CD8-positive, alpha-beta T cell (primary cell): ENCODE measurements at regions of chr7 and their contacts with region 1.

Region 1: GRCh38 chr7:130896898-130897514 is 163.0 kb upstream of the KLF14 start:
- DNase-seq: peak; percentile 51 to 89 (median 70)
- ATAC-seq: peak; percentile 70
- H3K4me3 ChIP-seq: no peak overlapping the region
- H3K4me3 Mint-ChIP-seq: no peak overlapping the region
- H3K27ac ChIP-seq: peak overlapping the region in 1 of 2 experiments; percentile 18
- H3K27ac Mint-ChIP-seq: peak overlapping the region; percentile 24
- H3K4me1 ChIP-seq: peaks cover 38% of the 10 kb centered on the region
- H3K4me1 Mint-ChIP-seq: peaks cover 70% of the 10 kb centered on the region
- H3K27me3 ChIP-seq: no peaks in the 10 kb centered on the region
- H3K27me3 Mint-ChIP-seq: no peaks in the 10 kb centered on the region
- CTCF ChIP-seq: peak; percentile 79

Region 2: GRCh38 chr7:130921391-130922180 is 24.6 kb after region 1 on chr7:
- CTCF ChIA-PET with region 1: interaction called, 13 read pairs
- POLR2A ChIA-PET with region 1: no interaction called
- intact Hi-C with region 1: no loop called
- DNase-seq: no peak
- ATAC-seq: no peak
- H3K4me3 ChIP-seq: no peak overlapping the region
- H3K4me3 Mint-ChIP-seq: no peak overlapping the region
- H3K27ac ChIP-seq: no peak overlapping the region
- H3K27ac Mint-ChIP-seq: no peak overlapping the region
- H3K4me1 ChIP-seq: peaks cover 21% of the 10 kb centered on the region
- H3K4me1 Mint-ChIP-seq: peaks cover 81% of the 10 kb centered on the region
- H3K27me3 ChIP-seq: no peaks in the 10 kb centered on the region
- H3K27me3 Mint-ChIP-seq: no peaks in the 10 kb centered on the region
- CTCF ChIP-seq: no peak

Region 3: GRCh38 chr7:130982160-130982638 is 85.2 kb after region 1 on chr7:
- CTCF ChIA-PET with region 1: interaction called, 45 read pairs
- POLR2A ChIA-PET with region 1: no interaction called
- intact Hi-C with region 1: loop called (anchors 5 kb)
- DNase-seq: peak in 3 of 9 experiments; percentile 24 to 77 (median 67)
- ATAC-seq: peak; percentile 67
- H3K4me3 ChIP-seq: no peak overlapping the region
- H3K4me3 Mint-ChIP-seq: no peak overlapping the region
- H3K27ac ChIP-seq: peak overlapping the region; percentile 13 to 62
- H3K27ac Mint-ChIP-seq: no peak overlapping the region
- H3K4me1 ChIP-seq: peaks cover 59% of the 10 kb centered on the region
- H3K4me1 Mint-ChIP-seq: peaks cover 17% of the 10 kb centered on the region
- H3K27me3 ChIP-seq: no peaks in the 10 kb centered on the region
- H3K27me3 Mint-ChIP-seq: no peaks in the 10 kb centered on the region
- CTCF ChIP-seq: peak; percentile 82

Region 4: GRCh38 chr7:131007394-131008330 is 110.7 kb after region 1 on chr7:
- CTCF ChIA-PET with region 1: interaction called, 19 read pairs
- POLR2A ChIA-PET with region 1: interaction called, 3 read pairs
- intact Hi-C with region 1: loop called (anchors 1 kb)
- DNase-seq: peak in 7 of 9 experiments; percentile 30 to 83 (median 51)
- ATAC-seq: peak; percentile 39
- H3K4me3 ChIP-seq: no peak overlapping the region
- H3K4me3 Mint-ChIP-seq: peak overlapping the region; percentile 53
- H3K27ac ChIP-seq: peak overlapping the region; percentile 3 to 73
- H3K27ac Mint-ChIP-seq: peak overlapping the region; percentile 60
- H3K4me1 ChIP-seq: peaks cover 62% of the 10 kb centered on the region
- H3K4me1 Mint-ChIP-seq: peaks cover 85% of the 10 kb centered on the region
- H3K27me3 ChIP-seq: no peaks in the 10 kb centered on the region
- H3K27me3 Mint-ChIP-seq: no peaks in the 10 kb centered on the region
- CTCF ChIP-seq: peak; percentile 50

Region 5: DNA sequence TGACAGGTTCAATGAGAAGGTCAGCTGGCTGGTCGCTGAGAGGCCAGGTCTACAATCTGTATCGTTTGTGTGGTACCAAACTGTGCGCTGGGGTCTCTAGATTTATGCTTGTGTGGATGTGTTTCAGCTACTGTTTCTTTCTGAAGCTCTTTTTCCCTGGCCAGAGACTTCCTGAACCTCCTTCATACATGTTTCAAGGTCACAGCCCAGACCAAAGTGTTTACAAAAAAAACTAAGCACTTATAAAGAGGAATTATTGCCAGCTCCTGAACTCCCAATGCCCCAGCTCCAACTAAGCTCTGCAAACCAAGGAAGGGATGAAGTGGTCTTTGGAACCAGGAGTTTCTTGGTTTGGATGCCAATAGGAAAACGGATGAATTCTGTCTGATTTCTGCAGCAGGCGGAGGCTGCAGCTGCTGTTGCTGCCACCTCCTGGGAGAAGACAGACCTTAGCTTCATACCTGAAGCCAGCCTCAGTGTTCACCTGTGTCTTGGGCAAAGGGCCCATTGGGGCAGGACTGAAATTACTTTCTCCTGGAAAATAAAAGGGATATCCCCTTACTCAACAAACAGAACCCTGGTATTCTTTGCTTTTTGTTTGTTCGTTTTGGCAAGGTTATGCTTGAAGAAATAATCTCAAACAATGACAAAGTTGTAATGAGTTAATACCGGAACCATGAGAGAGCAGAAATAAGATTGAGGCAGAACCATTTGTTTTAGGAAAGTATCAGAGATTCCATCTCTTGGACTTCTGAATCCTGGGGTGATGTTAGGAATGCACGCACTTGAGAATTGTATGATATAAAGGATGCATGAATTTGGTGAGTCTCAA is 406.1 kb after region 1 on chr7:
- CTCF ChIA-PET with region 1: interaction called, 12 read pairs
- POLR2A ChIA-PET with region 1: no interaction called
- intact Hi-C with region 1: loop called (anchors 1 to 2 kb)
- DNase-seq: peak in 7 of 9 experiments; percentile 19 to 60 (median 38)
- ATAC-seq: peak; percentile 56
- H3K4me3 ChIP-seq: no peak overlapping the region
- H3K4me3 Mint-ChIP-seq: no peak overlapping the region
- H3K27ac ChIP-seq: no peak overlapping the region
- H3K27ac Mint-ChIP-seq: no peak overlapping the region
- H3K4me1 ChIP-seq: no peaks in the 10 kb centered on the region
- H3K4me1 Mint-ChIP-seq: no peaks in the 10 kb centered on the region
- H3K27me3 ChIP-seq: no peaks in the 10 kb centered on the region
- H3K27me3 Mint-ChIP-seq: no peaks in the 10 kb centered on the region
- CTCF ChIP-seq: peak; percentile 50